Activated CD4-positive, alpha-beta T cell treated with anti-CD3 and anti-CD28 coated beads for 36 hours (primary cell): ENCODE measurements at regions of chr2 and their contacts with region 1.

Region 1: GRCh38 chr2:96116879-96117697 is 717 bp upstream of the ADRA2B start:
- DNase-seq: peak; percentile 80
- ATAC-seq: peak; percentile 87
- H3K4me3 Mint-ChIP-seq: peak overlapping the region; percentile 55
- H3K27ac Mint-ChIP-seq: no peak overlapping the region
- H3K4me1 Mint-ChIP-seq: peaks cover 10% of the 10 kb centered on the region
- H3K27me3 Mint-ChIP-seq: peaks cover 36% of the 10 kb centered on the region

Region 2: DNA sequence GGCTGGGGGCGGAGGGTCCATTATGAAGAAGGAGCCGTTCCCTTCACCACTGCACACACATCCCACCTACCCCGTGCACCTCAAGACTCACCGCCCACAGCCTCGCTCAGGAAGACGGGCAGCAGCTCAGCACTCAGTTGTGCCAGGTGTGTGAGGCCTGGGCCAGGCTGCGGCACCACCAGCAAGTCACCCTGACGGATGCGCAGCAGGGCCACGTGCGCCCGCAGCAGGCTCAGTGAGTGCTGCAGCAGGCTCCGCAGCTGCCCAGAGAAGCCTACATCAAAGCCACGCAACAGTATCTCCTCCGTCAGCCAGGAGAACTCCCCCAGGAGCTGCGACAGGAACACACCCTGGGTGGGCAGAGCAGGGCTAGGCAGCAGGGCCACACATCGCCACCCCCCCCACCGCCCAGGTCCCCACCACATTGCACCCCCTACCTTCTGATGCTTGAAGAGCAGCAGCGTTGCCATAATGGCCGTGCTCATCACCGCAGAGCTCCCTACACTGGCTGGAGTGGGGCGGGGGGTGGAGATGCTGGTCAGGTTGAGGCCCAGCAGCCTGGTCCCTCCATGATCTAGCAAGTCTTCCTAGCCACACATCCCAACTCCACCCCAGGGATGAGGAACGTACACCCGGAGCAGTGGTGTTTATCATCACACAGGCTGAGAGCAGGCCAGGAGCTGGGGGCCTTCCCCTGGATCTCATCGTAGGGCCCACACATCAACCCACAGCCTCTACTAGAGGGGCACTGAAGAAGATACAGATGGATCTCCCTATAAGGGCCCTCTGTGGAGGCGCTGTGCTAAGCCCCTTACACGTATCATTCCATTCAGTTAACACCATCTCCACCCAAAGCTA is 92.5 kb before region 1 on chr2:
- CTCF ChIA-PET with region 1: interaction called, 12 read pairs
- POLR2A ChIA-PET with region 1: no interaction called
- intact Hi-C with region 1: no loop called
- DNase-seq: peak; percentile 6
- ATAC-seq: no peak
- H3K4me3 Mint-ChIP-seq: no peak overlapping the region
- H3K27ac Mint-ChIP-seq: no peak overlapping the region
- H3K4me1 Mint-ChIP-seq: peaks cover 2% of the 10 kb centered on the region
- H3K27me3 Mint-ChIP-seq: no peaks in the 10 kb centered on the region

Region 3: DNA sequence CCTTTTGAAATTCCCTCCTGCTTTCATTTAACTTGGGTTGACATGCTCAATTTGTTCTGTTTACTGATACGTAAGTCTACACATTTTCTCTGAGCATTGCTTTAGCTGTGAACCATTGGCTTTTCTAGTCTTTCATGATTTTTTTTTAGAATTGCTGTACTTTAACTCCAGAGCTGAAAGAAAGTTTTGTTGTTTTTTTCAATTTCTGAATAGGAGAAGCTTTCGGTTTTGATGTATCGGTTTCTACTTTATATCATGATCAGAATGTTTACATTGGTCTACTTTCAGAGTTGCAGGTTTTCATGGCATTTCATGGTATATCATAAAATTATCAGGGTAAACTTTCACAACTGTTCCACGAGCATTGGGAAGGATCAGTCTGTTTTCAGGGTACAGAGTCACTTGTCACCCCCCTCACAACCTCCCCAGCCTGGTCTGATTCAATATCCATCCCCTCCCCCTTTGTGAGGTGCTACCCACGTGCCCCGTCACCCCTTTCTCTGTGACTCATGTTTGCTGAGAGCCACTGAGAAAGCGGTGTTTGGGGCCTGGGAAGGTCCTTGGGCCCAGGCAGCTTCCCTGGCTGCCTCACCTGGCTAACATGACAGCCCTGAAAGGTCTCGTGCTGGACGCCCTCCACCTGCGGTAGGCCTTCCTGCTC is 14.2 kb after region 1 on chr2:
- CTCF ChIA-PET with region 1: interaction called, 33 read pairs
- POLR2A ChIA-PET with region 1: no interaction called
- intact Hi-C with region 1: no loop called
- DNase-seq: peak; percentile 76
- ATAC-seq: peak; percentile 86
- H3K4me3 Mint-ChIP-seq: peak overlapping the region; percentile 5
- H3K27ac Mint-ChIP-seq: peak overlapping the region; percentile 91
- H3K4me1 Mint-ChIP-seq: peaks cover 18% of the 10 kb centered on the region
- H3K27me3 Mint-ChIP-seq: no peaks in the 10 kb centered on the region

Region 4: GRCh38 chr2:96164459-96165184 is 47.5 kb after region 1 on chr2:
- CTCF ChIA-PET with region 1: interaction called, 5 read pairs
- POLR2A ChIA-PET with region 1: no interaction called
- intact Hi-C with region 1: loop called in 1 of 2 experiments (anchors 2 kb)
- DNase-seq: peak; percentile 88
- ATAC-seq: peak; percentile 85
- H3K4me3 Mint-ChIP-seq: peak overlapping the region; percentile 82
- H3K27ac Mint-ChIP-seq: peak overlapping the region; percentile 100
- H3K4me1 Mint-ChIP-seq: peaks cover 80% of the 10 kb centered on the region
- H3K27me3 Mint-ChIP-seq: no peaks in the 10 kb centered on the region

Region 5: DNA sequence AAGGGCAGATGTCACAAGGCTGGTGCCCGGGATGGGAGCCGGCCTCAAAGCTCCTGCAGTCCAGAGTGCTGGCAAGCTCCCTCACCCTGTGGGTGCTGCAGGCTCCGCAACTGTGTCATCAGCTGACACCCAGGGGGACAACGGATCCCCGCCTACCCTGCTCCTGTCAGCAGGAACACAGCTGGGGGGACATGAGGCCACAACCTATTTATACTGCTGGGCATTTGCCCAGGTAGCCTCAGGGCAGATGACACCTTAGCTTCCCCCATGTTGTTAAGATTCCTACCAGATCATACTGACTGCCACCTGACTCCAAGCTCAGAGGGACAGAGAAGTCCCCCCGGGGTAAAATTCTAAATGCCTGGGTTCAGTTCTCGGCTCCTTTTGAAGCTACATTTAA is 725.5 kb after region 1 on chr2:
- CTCF ChIA-PET with region 1: no interaction called
- POLR2A ChIA-PET with region 1: no interaction called
- intact Hi-C with region 1: no loop called
- DNase-seq: no peak
- ATAC-seq: no peak
- H3K4me3 Mint-ChIP-seq: no peak overlapping the region
- H3K27ac Mint-ChIP-seq: no peak overlapping the region
- H3K4me1 Mint-ChIP-seq: peaks cover 11% of the 10 kb centered on the region
- H3K27me3 Mint-ChIP-seq: no peaks in the 10 kb centered on the region